Caki2 (cell line): ENCODE measurements at regions of chr4 and their contacts with region 1.

Region 1: DNA sequence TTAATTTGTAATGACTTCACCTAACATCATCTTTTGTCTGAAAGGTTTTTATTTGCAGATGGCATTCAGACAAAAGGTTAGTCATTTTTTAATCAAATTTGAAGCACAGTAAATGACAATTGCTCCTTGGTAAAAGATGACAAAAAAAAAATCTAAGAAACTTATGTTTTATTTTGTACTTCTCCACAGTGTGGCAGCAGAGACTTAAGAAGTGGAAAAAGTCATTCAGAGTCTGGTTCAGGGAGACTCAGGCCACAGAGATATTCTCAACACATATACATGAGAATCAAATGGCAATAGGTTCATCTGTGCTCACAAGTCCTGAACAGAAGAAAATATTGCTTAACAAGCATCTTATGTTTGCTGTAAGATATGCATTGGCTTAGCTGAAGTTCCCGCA is 436.2 kb downstream of the KCNIP4 start:
- DNase-seq: peak; percentile 39

Region 2: GRCh38 chr4:21447320-21448054 is 64.9 kb before region 1 on chr4:
- in situ Hi-C with region 1: no loop called
- DNase-seq: no peak

Region 3: GRCh38 chr4:21765810-21766407 is 253.6 kb after region 1 on chr4:
- in situ Hi-C with region 1: loop called (anchors 25 kb)
- DNase-seq: peak; percentile 71